Aorta (tissue), 5 donors: ENCODE measurements at regions of chr19 and their contacts with region 1.

Region 1: DNA sequence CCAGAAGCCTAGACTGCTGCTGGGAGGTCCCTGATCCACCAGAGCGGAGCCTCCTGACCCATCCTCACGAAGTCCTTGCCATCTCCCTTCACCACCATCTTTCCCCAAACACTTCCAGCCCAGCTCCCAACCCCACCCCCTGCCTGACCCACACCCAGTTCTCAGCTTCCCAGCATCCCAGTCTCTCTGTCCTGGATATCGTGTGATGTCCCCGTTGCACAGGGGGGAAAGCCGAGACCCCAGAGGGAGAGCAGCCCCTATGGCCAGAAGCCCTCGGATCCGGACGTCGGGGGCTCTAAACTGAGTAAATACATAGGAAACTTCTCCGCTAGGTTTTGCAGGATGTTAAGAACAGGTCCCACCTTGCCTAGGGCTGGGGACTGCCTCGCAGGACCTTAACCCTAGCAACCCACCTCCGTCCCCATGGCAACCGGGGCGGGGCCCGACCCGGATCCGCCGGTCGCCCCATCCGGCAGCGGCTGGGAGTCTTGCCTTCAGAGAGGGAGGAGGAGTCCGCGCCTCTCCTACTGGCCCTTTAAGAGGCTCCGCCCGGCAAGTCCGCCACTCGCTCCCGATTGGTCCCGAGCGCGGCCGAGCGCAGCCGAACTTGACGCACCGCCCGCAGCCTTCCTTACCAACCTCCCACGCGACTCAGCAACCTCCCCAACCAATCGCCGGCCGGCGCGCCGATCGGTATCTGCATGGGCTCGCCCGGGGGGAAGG is 451 bp upstream of the HMG20B start:
- DNase-seq: peak; percentile 100
- ATAC-seq: peak; percentile 98
- H3K4me3 ChIP-seq: peak overlapping the region in 1 of 2 donors; percentile 19
- H3K27ac ChIP-seq: no peak overlapping the region
- H3K4me1 ChIP-seq: no peaks in the 10 kb centered on the region
- H3K27me3 ChIP-seq: no peaks in the 10 kb centered on the region

Region 2: GRCh38 chr19:3557461-3558248 is 14.6 kb before region 1 on chr19 and contains the start of gene MFSD12:
- intact Hi-C with region 1: loop called in 1 of 2 experiments (anchors 1 kb)
- DNase-seq: peak; percentile 97 to 98
- ATAC-seq: peak; percentile 99
- H3K4me3 ChIP-seq: peak within 1 kb of the TSS; percentile 83 to 91
- H3K27ac ChIP-seq: no peak within 1 kb of the TSS
- H3K4me1 ChIP-seq: no peaks in the 10 kb centered on the region
- H3K27me3 ChIP-seq: no peaks in the 10 kb centered on the region
- total RNA-seq, gene MFSD12: 40.7 to 47.7 TPM

Region 3: DNA sequence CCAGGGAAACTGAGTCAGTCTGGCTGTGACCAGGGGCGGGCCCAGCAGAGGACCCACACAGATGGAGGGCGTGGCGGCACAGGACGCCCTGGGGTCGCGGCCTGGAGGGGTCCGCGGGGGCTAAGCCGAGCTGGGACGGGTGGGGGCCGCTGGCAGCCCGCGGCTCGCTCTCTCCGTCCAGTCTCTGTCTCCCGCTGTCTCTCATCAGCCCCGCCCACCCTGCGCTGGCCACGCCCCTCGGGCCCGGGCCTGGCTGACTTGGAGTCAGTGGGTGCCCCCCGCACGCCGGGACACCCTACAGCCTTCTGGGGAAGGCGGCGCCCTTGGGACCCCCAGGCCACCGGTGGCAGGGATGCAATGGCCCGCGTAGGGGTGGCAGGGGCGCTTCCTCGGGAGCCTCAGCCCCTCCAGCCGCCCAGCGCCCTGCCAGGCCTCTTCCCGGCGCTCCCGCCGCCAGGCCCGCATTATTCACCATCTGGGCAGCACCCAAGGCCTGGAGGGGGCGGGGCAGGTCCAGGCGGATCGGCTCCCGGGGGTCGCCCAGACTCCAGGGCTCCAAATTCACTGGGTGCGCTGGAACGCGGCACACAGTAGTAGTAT is 34.5 kb after region 1 on chr19 and contains the start of gene TBXA2R:
- intact Hi-C with region 1: loop called in 1 of 2 experiments (anchors 5 kb)
- DNase-seq: peak; percentile 90 to 95
- ATAC-seq: peak; percentile 72
- H3K4me3 ChIP-seq: peak within 1 kb of the TSS; percentile 78 to 89
- H3K27ac ChIP-seq: peak within 1 kb of the TSS; percentile 65 to 98
- H3K4me1 ChIP-seq: peaks cover 0 to 2% of the 10 kb centered on the region in 2 donors
- H3K27me3 ChIP-seq: no peaks in the 10 kb centered on the region
- total RNA-seq, gene TBXA2R: 36.0 to 40.5 TPM